Activated CD4-positive, alpha-beta T cell treated with anti-CD3 and anti-CD28 coated beads, Interleukin-2, amount 10 ng/mL, durations not matched to agents 24 days and 14 days (primary cell): ENCODE measurements at regions of chr2 and their contacts with region 1.

Region 1: GRCh38 chr2:224969633-224970260 is 72.5 kb downstream of the DOCK10 start:
- DNase-seq: no peak
- H3K4me3 Mint-ChIP-seq: peak overlapping the region; percentile 35
- H3K27ac Mint-ChIP-seq: peak overlapping the region; percentile 83
- H3K4me1 Mint-ChIP-seq: peaks cover 53% of the 10 kb centered on the region
- H3K27me3 Mint-ChIP-seq: no peaks in the 10 kb centered on the region

Region 2: GRCh38 chr2:224952936-224953657 is 16.6 kb before region 1 on chr2:
- intact Hi-C with region 1: loop called (anchors 2 kb)
- DNase-seq: peak; percentile 84
- H3K4me3 Mint-ChIP-seq: peak overlapping the region; percentile 66
- H3K27ac Mint-ChIP-seq: peak overlapping the region; percentile 66
- H3K4me1 Mint-ChIP-seq: peaks cover 71% of the 10 kb centered on the region
- H3K27me3 Mint-ChIP-seq: no peaks in the 10 kb centered on the region

Region 3: DNA sequence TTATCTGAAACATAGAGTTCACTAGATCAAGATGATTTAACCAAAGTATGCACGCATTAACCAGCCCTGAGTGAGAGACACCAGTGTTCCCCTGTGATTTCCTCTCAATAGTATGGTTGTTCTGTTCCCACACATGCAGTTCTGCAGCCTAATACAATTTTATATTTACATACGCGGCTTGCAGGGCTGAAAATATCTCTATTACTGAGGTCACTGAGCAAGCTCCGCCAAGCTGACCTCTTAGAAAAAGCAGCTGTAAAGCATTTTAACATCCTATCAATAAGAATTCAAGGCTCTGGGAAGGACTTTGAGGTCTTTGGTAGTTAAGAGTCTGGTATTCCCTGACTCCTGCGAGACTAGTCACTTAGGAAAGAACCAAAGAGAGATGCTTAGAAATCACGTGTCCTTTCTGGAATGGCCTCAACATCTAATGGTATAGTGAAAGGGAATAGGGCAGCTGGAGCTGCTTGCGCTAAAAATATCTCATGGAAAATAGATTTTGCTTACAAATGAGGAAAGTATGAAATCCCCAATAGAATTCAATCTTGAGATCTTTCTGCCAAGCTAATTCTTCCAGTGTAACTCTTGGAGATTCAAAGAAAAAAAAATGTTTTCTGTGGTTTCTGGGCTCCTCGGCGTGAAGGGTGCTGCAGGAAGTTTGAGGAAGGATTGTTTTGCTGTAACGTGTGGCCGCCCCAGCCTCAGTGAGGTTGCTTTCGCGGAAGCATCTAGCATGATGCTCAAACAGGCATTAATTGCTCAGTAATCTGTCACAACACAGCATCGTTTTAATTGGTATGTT is 13.4 kb after region 1 on chr2:
- intact Hi-C with region 1: loop called (anchors 2 kb)
- DNase-seq: peak; percentile 86
- H3K4me3 Mint-ChIP-seq: peak overlapping the region; percentile 67
- H3K27ac Mint-ChIP-seq: peak overlapping the region; percentile 85
- H3K4me1 Mint-ChIP-seq: peaks cover 70% of the 10 kb centered on the region
- H3K27me3 Mint-ChIP-seq: no peaks in the 10 kb centered on the region

Region 4: GRCh38 chr2:225434014-225434413 is 464.3 kb after region 1 on chr2:
- intact Hi-C with region 1: no loop called
- DNase-seq: no peak
- H3K4me3 Mint-ChIP-seq: no peak overlapping the region
- H3K27ac Mint-ChIP-seq: no peak overlapping the region
- H3K4me1 Mint-ChIP-seq: no peaks in the 10 kb centered on the region
- H3K27me3 Mint-ChIP-seq: peaks cover 1% of the 10 kb centered on the region